ENCODE measurements at regions of chr5 and their contacts with region 1.

Region 1: DNA sequence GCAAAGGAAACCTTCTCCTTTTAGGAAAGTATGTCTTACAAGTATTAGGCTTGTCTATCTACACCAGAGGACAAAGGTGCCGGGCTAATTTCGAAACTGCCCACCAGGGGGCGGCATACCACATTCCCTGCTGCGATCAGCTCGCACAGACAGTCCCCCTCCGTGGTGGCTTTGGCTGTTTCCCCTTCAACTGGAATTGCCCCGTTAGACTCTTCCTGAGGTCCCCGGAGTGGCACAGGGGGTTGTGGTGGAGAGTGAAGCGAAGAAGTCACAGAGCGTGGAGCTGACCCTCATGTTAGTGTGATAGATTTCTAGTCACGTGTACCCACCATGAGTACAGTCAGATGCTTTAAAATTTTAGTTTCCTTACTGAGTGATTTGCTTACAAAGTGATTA is 17.5 kb downstream of the PTTG1 start:
- DNase-seq: peak; percentile 86
- ATAC-seq: peak; percentile 77
- H3K4me3 Mint-ChIP-seq: peak overlapping the region; percentile 87
- H3K27ac Mint-ChIP-seq: peak overlapping the region; percentile 94
- H3K4me1 Mint-ChIP-seq: peaks cover 60% of the 10 kb centered on the region
- H3K27me3 Mint-ChIP-seq: no peaks in the 10 kb centered on the region
- CTCF ChIP-seq: peak; percentile 81

Region 2: GRCh38 chr5:160427607-160428006 is 11.6 kb before region 1 on chr5:
- CTCF ChIA-PET with region 1: interaction called, 33 read pairs
- POLR2A ChIA-PET with region 1: interaction called, 5 read pairs
- intact Hi-C with region 1: no loop called
- DNase-seq: no peak
- ATAC-seq: no peak
- H3K4me3 Mint-ChIP-seq: no peak overlapping the region
- H3K27ac Mint-ChIP-seq: no peak overlapping the region
- H3K4me1 Mint-ChIP-seq: peaks cover 42% of the 10 kb centered on the region
- H3K27me3 Mint-ChIP-seq: no peaks in the 10 kb centered on the region
- CTCF ChIP-seq: no peak

Region 3: GRCh38 chr5:160467555-160468362 is 28.6 kb after region 1 on chr5:
- CTCF ChIA-PET with region 1: interaction called, 132 read pairs
- POLR2A ChIA-PET with region 1: interaction called, 154 read pairs
- intact Hi-C with region 1: loop called (anchors 1 kb)
- DNase-seq: peak; percentile 82
- ATAC-seq: peak; percentile 86
- H3K4me3 Mint-ChIP-seq: peak overlapping the region; percentile 100
- H3K27ac Mint-ChIP-seq: peak overlapping the region; percentile 100
- H3K4me1 Mint-ChIP-seq: peaks cover 81% of the 10 kb centered on the region
- H3K27me3 Mint-ChIP-seq: no peaks in the 10 kb centered on the region
- CTCF ChIP-seq: no peak

Region 4: DNA sequence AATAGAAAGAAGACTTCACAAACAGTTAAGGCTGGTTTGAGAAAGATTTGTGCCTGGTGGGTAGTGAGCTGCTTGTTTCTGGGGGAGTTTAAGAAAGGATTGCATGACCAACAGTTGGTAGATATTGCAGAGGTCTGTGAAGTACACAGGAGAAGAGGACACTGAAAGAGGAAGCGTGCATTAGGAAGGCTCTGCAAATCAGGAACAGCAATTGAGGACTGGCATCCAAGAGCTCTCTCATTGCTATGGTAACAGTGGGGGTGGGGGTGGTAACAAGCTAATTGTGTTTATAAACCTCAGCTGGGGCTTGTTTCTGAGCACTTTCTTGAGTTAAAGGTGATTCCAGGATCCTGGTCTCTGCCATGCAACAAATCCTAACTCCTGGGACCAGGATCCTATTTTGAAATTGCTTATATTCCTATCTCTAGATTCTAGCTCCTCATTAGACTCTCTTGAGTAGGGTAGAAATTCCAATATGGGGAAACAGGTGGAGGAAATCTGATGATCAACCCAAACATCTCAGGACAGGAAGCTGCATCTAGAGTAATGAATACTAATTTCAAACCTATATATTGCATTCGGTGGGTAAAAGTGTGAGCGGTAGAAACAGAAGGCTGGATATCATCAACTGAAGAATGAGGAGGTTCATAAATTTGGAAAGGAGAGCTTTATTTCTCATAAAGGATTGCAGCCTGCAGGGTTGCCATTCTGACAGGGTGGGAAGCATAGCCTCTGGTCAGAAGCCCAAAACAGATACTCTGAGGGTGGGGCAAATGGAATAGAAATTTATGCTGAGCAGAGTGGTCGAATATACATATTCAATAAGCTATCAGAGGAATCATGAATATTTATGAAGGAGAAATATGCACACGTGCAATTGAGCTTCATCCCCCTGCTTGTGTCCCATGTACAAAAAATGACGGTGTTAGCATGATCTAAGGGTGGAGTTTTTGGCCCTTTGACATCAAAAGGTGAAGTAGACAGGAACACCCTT is 61.9 kb after region 1 on chr5:
- CTCF ChIA-PET with region 1: interaction called, 128 read pairs
- POLR2A ChIA-PET with region 1: interaction called, 12 read pairs
- intact Hi-C with region 1: no loop called
- DNase-seq: no peak
- ATAC-seq: no peak
- H3K4me3 Mint-ChIP-seq: no peak overlapping the region
- H3K27ac Mint-ChIP-seq: no peak overlapping the region
- H3K4me1 Mint-ChIP-seq: peaks cover 13% of the 10 kb centered on the region
- H3K27me3 Mint-ChIP-seq: no peaks in the 10 kb centered on the region
- CTCF ChIP-seq: no peak

Region 5: GRCh38 chr5:160520609-160521391 is 81.6 kb after region 1 on chr5:
- CTCF ChIA-PET with region 1: no interaction called
- POLR2A ChIA-PET with region 1: no interaction called
- intact Hi-C with region 1: no loop called
- DNase-seq: no peak
- ATAC-seq: no peak
- H3K4me3 Mint-ChIP-seq: no peak overlapping the region
- H3K27ac Mint-ChIP-seq: no peak overlapping the region
- H3K4me1 Mint-ChIP-seq: no peaks in the 10 kb centered on the region
- H3K27me3 Mint-ChIP-seq: no peaks in the 10 kb centered on the region
- CTCF ChIP-seq: no peak

Region 6: DNA sequence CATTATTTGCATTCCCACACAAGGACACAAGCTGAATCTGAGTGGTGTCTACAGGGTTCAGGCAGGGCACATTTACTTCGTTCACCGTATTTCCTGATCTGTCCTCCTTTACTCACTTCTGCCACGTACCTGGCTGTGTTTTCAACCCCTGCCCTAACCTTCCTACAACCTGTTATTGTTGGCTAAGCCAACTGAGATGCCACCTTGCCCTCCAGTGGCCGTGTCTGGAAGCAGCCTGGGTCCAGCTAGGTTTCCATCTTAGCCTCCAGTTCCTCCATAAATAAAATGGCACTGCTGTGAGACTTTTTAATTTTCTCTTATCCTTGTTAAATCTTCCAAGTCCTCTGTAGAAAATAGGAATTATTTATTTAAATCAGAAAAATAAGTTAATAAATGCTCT is 348.0 kb after region 1 on chr5:
- CTCF ChIA-PET with region 1: interaction called, 12 read pairs
- POLR2A ChIA-PET with region 1: interaction called, 5 read pairs
- intact Hi-C with region 1: loop called (anchors 1 kb)
- DNase-seq: no peak
- ATAC-seq: no peak
- H3K4me3 Mint-ChIP-seq: no peak overlapping the region
- H3K27ac Mint-ChIP-seq: no peak overlapping the region
- H3K4me1 Mint-ChIP-seq: no peaks in the 10 kb centered on the region
- H3K27me3 Mint-ChIP-seq: no peaks in the 10 kb centered on the region
- CTCF ChIP-seq: no peak

Region 7: GRCh38 chr5:161544350-161544765 is 1105.2 kb after region 1 on chr5:
- CTCF ChIA-PET with region 1: no interaction called
- POLR2A ChIA-PET with region 1: no interaction called
- intact Hi-C with region 1: loop called (anchors 5 kb)
- DNase-seq: no peak
- ATAC-seq: no peak
- H3K4me3 Mint-ChIP-seq: no peak overlapping the region
- H3K27ac Mint-ChIP-seq: no peak overlapping the region
- H3K4me1 Mint-ChIP-seq: peaks cover 23% of the 10 kb centered on the region
- H3K27me3 Mint-ChIP-seq: peaks cover 38% of the 10 kb centered on the region
- CTCF ChIP-seq: no peak

Measured in activated B cell treated with CpG ODN at 0.5 μM for 24 hours (primary cell).